Panc1 (cell line): ENCODE measurements at regions of chr3 and their contacts with region 1.

Region 1: DNA sequence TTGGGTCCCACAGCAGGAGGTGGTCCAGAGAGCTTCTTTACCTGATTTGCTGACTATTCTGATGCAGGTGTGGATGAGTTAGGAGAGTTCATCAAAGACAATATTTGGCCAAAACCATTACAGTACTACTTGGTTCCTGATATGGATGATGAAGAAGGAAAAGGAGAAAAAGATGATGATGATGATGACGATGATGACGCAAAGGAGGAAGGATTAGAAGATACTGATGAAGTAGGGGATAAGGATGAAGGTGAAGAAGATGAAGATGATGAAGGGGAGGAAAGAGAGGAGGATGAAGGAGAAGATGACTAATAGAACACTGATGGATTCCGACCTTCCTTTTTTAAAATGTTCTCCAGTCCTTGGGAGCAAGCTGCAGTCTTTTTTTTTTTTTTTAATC is 148.7 kb downstream of the GBE1 start:
- DNase-seq: no peak
- ATAC-seq: no peak
- H3K4me3 ChIP-seq: no peak overlapping the region
- H3K27ac ChIP-seq: no peak overlapping the region
- H3K4me1 ChIP-seq: no peaks in the 10 kb centered on the region
- H3K27me3 ChIP-seq: no peaks in the 10 kb centered on the region
- CTCF ChIP-seq: no peak

Region 2: GRCh38 chr3:81500039-81500438 is 112.7 kb before region 1 on chr3:
- CTCF ChIA-PET with region 1: no interaction called
- POLR2A ChIA-PET with region 1: interaction called, 24 read pairs
- in situ Hi-C with region 1: no loop called
- intact Hi-C with region 1: no loop called
- DNase-seq: no peak
- ATAC-seq: no peak
- H3K4me3 ChIP-seq: no peak overlapping the region
- H3K27ac ChIP-seq: no peak overlapping the region
- H3K4me1 ChIP-seq: no peaks in the 10 kb centered on the region
- H3K27me3 ChIP-seq: no peaks in the 10 kb centered on the region
- CTCF ChIP-seq: no peak

Region 3: GRCh38 chr3:81632659-81633058 is 19.9 kb after region 1 on chr3:
- CTCF ChIA-PET with region 1: no interaction called
- POLR2A ChIA-PET with region 1: no interaction called
- in situ Hi-C with region 1: no loop called
- intact Hi-C with region 1: no loop called
- DNase-seq: no peak
- ATAC-seq: no peak
- H3K4me3 ChIP-seq: no peak overlapping the region
- H3K27ac ChIP-seq: no peak overlapping the region
- H3K4me1 ChIP-seq: no peaks in the 10 kb centered on the region
- H3K27me3 ChIP-seq: no peaks in the 10 kb centered on the region
- CTCF ChIP-seq: no peak

Region 4: GRCh38 chr3:81650187-81650586 is 37.4 kb after region 1 on chr3:
- CTCF ChIA-PET with region 1: interaction called, 12 read pairs
- POLR2A ChIA-PET with region 1: no interaction called
- in situ Hi-C with region 1: no loop called
- intact Hi-C with region 1: no loop called
- DNase-seq: no peak
- ATAC-seq: no peak
- H3K4me3 ChIP-seq: no peak overlapping the region
- H3K27ac ChIP-seq: no peak overlapping the region
- H3K4me1 ChIP-seq: no peaks in the 10 kb centered on the region
- H3K27me3 ChIP-seq: no peaks in the 10 kb centered on the region
- CTCF ChIP-seq: no peak